Psoas muscle (tissue), 8 donors: ENCODE measurements at regions of chr17 and their contacts with region 1.

Region 1: GRCh38 chr17:16962818-16963217 is 9.1 kb downstream of the TNFRSF13B start:
- DNase-seq: no peak
- ATAC-seq: no peak
- H3K4me3 ChIP-seq: no peak overlapping the region
- H3K27ac ChIP-seq: no peak overlapping the region
- H3K4me1 ChIP-seq: no peaks in the 10 kb centered on the region
- H3K27me3 ChIP-seq: peaks cover 0 to 11% (median 3%) of the 10 kb centered on the region in 3 donors
- CTCF ChIP-seq: no peak

Region 2: GRCh38 chr17:17455173-17455572 is 492.4 kb after region 1 on chr17:
- intact Hi-C with region 1: loop called in 1 of 2 experiments (anchors 10 kb)
- DNase-seq: no peak
- ATAC-seq: no peak
- H3K4me3 ChIP-seq: no peak overlapping the region
- H3K27ac ChIP-seq: no peak overlapping the region
- H3K4me1 ChIP-seq: no peaks in the 10 kb centered on the region
- H3K27me3 ChIP-seq: no peaks in the 10 kb centered on the region
- CTCF ChIP-seq: no peak